ENCODE measurements at regions of chr1 and their contacts with region 1.

Region 1: DNA sequence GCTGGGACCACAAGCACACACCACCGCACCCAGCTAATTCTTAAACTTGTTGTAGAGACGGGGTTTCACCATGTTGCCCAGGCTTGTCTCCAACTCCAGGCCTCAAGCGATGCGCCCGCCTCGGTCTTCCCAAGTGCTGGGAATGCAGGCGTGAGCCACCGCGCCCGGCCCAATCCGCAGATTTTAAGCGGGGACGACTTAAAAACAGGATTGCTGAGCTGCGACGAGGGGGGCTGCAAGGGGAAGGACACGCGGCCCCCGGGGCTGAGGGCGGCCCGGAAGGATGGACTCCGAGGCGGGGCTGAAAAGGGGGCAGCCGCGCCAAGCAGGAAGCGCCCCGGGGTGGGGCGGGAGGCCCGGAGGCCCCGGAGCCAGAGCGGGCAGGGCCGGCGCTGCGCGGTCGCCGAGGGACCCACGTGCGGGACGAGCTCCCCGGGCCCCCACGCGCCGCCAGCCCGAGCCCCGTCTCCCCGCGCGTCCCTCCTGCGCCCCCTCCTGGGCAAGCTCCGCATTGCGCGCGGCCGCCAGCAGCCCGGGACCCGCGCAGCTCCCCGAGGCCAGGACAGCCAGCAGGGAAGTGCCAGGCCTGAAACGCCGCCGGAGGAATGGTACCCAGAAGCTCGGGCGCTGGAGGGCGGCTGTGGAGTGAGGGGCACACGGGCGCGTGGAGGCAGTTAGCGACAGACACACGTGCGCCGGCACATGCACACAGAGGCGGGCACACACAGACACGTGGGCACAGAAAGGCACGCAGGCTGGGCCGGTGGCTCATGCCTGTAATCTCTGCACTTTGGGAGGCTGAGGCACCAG is 5.5 kb upstream of the PRKCZ start:
- DNase-seq: peak in 1 of 2 experiments; percentile 82
- H3K4me3 ChIP-seq: no peak overlapping the region
- H3K4me3 Mint-ChIP-seq: no peak overlapping the region
- H3K27ac Mint-ChIP-seq: no peak overlapping the region
- H3K4me1 ChIP-seq: peaks cover 29% of the 10 kb centered on the region
- H3K4me1 Mint-ChIP-seq: peaks cover 14% of the 10 kb centered on the region
- H3K27me3 ChIP-seq: no peaks in the 10 kb centered on the region
- H3K27me3 Mint-ChIP-seq: no peaks in the 10 kb centered on the region
- CTCF ChIP-seq: peak; percentile 48 to 77

Region 2: GRCh38 chr1:1815606-1816281 is 229.0 kb before region 1 on chr1:
- CTCF ChIA-PET with region 1: no interaction called
- POLR2A ChIA-PET with region 1: no interaction called
- intact Hi-C with region 1: no loop called
- DNase-seq: no peak
- H3K4me3 ChIP-seq: no peak overlapping the region
- H3K4me3 Mint-ChIP-seq: no peak overlapping the region
- H3K27ac Mint-ChIP-seq: peak overlapping the region; percentile 63
- H3K4me1 ChIP-seq: no peaks in the 10 kb centered on the region
- H3K4me1 Mint-ChIP-seq: peaks cover 6% of the 10 kb centered on the region
- H3K27me3 ChIP-seq: no peaks in the 10 kb centered on the region
- H3K27me3 Mint-ChIP-seq: no peaks in the 10 kb centered on the region
- CTCF ChIP-seq: no peak

Region 3: DNA sequence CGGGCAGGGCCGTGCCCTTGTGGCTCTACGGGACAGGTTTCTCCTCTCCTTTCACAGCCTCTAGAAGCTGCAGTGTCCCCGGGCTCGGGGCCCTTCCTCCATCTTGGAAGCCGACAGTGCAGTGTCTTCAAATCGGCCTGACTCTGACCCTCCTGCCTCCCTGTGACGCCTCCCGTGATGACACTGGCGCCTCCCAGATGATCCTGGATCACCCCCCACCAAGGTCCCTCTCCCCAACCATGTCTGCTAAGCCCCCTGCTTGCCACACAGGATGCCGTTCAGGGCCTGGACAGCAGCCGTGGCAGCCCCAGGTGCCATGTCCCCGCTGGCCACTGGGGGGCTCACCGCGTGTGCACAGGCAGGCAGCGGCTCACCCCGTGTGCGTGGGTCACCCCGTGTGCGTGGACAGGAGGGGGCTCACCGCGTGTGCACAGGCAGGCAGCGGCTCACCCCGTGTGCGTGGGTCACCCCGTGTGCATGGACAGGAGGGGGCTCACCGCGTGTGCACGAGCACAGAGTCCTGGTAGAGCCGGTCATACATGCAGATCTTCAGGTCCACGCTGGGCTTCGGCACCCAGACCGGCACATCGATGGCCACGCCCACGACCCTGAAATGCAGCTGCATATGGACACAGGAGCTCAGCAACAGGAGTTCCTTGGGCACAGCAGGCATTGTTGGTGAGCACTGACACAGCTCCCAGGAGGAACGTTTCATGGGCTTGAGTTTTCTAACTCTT is 100.7 kb before region 1 on chr1:
- CTCF ChIA-PET with region 1: interaction called, 12 read pairs
- POLR2A ChIA-PET with region 1: no interaction called
- intact Hi-C with region 1: loop called (anchors 1 kb)
- DNase-seq: peak; percentile 70 to 78
- H3K4me3 ChIP-seq: peak overlapping the region; percentile 58
- H3K4me3 Mint-ChIP-seq: peak overlapping the region; percentile 65
- H3K27ac Mint-ChIP-seq: no peak overlapping the region
- H3K4me1 ChIP-seq: no peaks in the 10 kb centered on the region
- H3K4me1 Mint-ChIP-seq: no peaks in the 10 kb centered on the region
- H3K27me3 ChIP-seq: no peaks in the 10 kb centered on the region
- H3K27me3 Mint-ChIP-seq: no peaks in the 10 kb centered on the region
- CTCF ChIP-seq: peak; percentile 77 to 83

Region 4: GRCh38 chr1:1959840-1960479 is 84.8 kb before region 1 on chr1:
- CTCF ChIA-PET with region 1: interaction called, 30 read pairs
- POLR2A ChIA-PET with region 1: no interaction called
- intact Hi-C with region 1: loop called (anchors 1 kb)
- DNase-seq: peak; percentile 82 to 87
- H3K4me3 ChIP-seq: no peak overlapping the region
- H3K4me3 Mint-ChIP-seq: peak overlapping the region; percentile 16
- H3K27ac Mint-ChIP-seq: no peak overlapping the region
- H3K4me1 ChIP-seq: 0 out of 2 replicates have a peak, but pooled peaks cover 6% of the 10 kb centered on the region
- H3K4me1 Mint-ChIP-seq: no peaks in the 10 kb centered on the region
- H3K27me3 ChIP-seq: no peaks in the 10 kb centered on the region
- H3K27me3 Mint-ChIP-seq: no peaks in the 10 kb centered on the region
- CTCF ChIP-seq: peak; percentile 65 to 89

Region 5: DNA sequence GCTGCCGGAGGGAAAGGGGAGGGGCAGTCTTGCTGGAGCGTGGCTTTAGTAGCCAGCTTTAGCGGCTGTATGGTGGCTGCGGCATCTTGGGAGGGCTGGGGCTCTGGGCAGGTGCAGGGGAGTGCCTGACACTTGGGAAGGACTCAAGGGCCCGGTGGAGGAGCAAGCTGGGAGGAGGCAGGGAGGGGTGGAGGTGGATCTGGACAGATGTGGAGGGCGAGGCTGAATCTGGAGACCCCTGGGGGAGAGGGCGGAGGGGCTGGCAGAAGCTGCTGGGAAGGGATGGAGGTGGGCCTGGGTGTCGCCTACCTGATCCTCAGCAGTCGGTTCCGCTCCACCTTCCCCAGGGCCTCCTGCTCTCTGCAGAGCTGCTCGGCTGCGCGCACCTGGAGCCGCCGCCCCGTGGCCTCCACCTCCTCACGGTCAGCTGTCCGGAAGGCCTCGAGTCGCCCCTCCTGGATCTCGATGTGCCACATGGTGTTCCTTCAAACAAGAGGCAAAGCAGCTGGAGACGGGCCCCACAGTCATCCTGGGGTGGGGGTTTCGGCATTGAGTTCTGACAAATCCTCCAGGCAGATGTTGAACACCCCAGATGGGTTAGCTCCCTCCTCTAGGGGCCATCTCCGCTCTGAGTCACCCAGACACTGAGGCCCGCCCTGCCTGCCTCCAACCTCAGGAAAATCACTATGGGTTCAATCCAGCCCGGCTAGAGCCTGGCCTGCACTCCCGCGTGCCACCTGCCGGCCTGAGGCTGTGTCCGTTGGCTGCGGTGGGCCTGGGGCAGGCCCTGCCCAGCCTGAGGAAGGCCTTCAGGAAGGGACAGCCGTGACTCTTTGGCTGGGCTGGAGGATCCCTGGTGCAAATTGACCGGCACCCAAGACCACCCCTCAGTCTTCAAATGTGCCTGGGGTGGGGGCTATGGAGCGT is 70.7 kb before region 1 on chr1:
- CTCF ChIA-PET with region 1: no interaction called
- POLR2A ChIA-PET with region 1: no interaction called
- intact Hi-C with region 1: no loop called
- DNase-seq: no peak
- H3K4me3 ChIP-seq: no peak overlapping the region
- H3K4me3 Mint-ChIP-seq: no peak overlapping the region
- H3K27ac Mint-ChIP-seq: no peak overlapping the region
- H3K4me1 ChIP-seq: no peaks in the 10 kb centered on the region
- H3K4me1 Mint-ChIP-seq: no peaks in the 10 kb centered on the region
- H3K27me3 ChIP-seq: no peaks in the 10 kb centered on the region
- H3K27me3 Mint-ChIP-seq: peaks cover 7% of the 10 kb centered on the region
- CTCF ChIP-seq: no peak

Region 6: DNA sequence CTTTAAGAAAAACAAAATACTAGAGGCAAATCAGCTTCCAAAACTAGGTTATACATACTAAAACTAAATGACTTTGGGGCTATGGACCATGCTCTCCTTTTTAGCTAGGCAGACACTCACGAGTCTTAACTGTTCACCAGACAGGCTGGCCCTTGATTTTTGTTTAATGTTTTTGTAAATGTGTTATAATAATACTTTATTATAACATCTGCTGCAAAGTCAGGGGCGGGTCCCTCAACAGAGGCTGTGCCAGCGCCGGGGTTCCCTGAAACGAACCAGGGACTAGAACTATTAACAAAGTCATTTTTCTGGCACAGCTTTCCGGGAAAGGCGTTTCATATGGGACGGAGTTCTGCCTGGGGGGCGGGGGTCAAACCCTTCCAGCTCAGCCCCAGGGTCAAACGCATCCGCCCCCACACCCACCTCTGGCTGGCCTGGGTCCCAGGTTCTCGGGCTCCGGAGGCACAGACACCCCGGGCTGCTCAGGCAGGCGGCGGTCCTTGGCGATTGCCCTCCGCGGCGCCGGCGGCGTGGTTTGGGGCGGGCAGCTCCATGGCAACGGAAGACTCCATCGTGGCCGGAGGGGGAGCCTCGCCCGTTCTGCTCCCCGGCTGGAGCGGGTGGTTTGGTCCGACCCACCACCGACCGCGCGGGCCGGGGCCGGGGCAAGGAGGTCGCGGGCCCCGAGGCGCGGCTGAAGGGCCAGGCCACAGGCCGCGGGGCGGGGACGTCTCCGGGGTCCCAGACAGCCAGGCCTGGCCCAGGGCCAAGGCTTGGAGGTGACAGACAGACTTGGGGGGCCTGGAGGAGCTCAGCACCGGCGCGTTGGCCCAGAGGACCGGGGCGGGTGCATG is 41.2 kb before region 1 on chr1 and contains the start of gene CFAP74:
- CTCF ChIA-PET with region 1: interaction called, 12 read pairs
- POLR2A ChIA-PET with region 1: no interaction called
- intact Hi-C with region 1: loop called (anchors 5 kb)
- DNase-seq: peak; percentile 66 to 83
- H3K4me3 ChIP-seq: peak within 1 kb of the TSS; percentile 27
- H3K4me3 Mint-ChIP-seq: peak within 1 kb of the TSS; percentile 56
- H3K27ac Mint-ChIP-seq: no peak within 1 kb of the TSS
- H3K4me1 ChIP-seq: peaks cover 7% of the 10 kb centered on the region
- H3K4me1 Mint-ChIP-seq: no peaks in the 10 kb centered on the region
- H3K27me3 ChIP-seq: no peaks in the 10 kb centered on the region
- H3K27me3 Mint-ChIP-seq: no peaks in the 10 kb centered on the region
- CTCF ChIP-seq: no peak
- total RNA-seq, gene CFAP74: not detected in 2 replicates

Region 7: DNA sequence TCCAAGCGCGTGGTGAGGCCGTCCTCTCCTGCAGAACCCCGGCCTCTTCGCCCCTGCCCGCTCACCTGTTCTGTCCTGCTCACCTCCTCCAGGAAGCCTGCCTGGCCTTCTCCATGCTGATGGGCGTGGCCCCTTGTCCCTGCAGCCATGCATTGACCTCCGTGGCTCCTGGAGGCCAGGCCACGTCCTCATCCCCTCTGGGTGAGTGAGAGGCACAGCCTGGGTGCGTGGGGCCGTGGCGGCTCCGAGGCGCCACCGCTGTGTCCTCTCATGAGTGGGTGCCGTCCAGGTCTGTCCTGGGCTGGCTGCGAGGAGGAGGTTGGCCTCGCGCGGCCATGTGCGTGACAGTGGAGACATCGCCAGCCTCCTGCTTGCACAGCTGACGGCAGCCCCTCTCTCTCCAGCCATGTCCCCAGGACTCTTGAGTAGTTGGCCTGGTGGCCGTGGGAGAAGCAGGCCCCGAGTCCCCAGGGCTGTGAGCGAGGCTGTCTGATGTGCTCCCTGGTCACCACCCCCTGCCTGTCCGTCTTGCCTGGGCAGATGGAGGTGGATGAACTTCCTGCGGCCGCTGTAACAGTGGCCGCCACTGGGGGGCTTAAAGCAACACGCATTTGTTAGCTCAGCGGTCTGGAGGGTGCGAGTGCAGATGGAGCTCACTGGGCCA is 63.6 kb after region 1 on chr1:
- CTCF ChIA-PET with region 1: no interaction called
- POLR2A ChIA-PET with region 1: no interaction called
- intact Hi-C with region 1: no loop called
- DNase-seq: peak; percentile 52 to 53
- H3K4me3 ChIP-seq: no peak overlapping the region
- H3K4me3 Mint-ChIP-seq: no peak overlapping the region
- H3K27ac Mint-ChIP-seq: no peak overlapping the region
- H3K4me1 ChIP-seq: no peaks in the 10 kb centered on the region
- H3K4me1 Mint-ChIP-seq: no peaks in the 10 kb centered on the region
- H3K27me3 ChIP-seq: no peaks in the 10 kb centered on the region
- H3K27me3 Mint-ChIP-seq: no peaks in the 10 kb centered on the region
- CTCF ChIP-seq: peak; percentile 36 to 46

Region 8: DNA sequence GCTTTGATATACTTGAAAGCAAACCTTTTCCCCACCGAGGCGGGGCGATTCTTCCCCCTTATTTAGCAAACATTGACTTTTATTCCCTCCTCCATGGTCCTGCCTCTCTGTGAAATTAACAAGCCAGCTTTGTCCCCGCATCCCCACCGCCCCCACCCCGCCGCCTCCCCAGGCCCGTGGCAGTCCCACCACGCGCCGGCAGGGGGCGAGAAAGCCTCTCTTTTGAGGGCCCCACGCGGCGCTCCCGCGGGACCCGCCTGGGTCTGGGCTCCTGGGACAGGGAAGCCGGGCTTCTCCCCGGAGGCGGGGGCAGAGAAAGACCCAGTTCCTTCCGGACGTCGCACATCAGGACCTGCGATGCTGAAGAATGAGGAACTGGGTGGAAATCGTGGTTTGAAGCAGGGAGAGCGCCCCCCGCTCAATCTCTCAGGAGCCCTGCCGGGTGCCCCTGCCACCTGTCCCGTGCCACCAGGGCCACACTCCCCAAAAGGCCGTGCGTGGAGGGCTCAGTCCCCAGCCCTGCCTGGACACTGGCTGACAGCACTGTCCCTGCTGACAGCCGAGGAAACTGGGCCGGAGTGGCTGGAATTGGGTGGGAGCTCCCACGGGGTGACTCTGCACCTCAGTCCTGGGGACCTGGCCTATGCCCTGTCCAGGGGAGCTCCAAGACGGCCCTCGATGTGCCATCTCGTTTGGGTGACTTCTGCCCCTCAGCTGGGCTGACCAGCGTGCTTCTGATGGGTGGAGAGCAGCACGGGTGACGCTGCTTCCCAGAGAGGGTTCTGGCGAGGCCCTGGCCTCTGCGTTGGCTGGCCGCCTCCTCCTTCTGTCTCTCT is 968.0 kb after region 1 on chr1:
- CTCF ChIA-PET with region 1: no interaction called
- POLR2A ChIA-PET with region 1: no interaction called
- intact Hi-C with region 1: no loop called
- DNase-seq: peak in 1 of 2 experiments; percentile 68
- H3K4me3 ChIP-seq: no peak overlapping the region
- H3K4me3 Mint-ChIP-seq: no peak overlapping the region
- H3K27ac Mint-ChIP-seq: no peak overlapping the region
- H3K4me1 ChIP-seq: no peaks in the 10 kb centered on the region
- H3K4me1 Mint-ChIP-seq: no peaks in the 10 kb centered on the region
- H3K27me3 ChIP-seq: no peaks in the 10 kb centered on the region
- H3K27me3 Mint-ChIP-seq: peaks cover 4% of the 10 kb centered on the region
- CTCF ChIP-seq: peak; percentile 60 to 77

Measured in Caco-2 (cell line).